ENCODE measurements at regions of chr1 and their contacts with region 1.

Region 1: GRCh38 chr1:110019770-110020169 is 14.7 kb upstream of the STRIP1 start:
- DNase-seq: no peak
- H3K4me3 ChIP-seq: no peak overlapping the region
- H3K27ac ChIP-seq: no peak overlapping the region
- H3K4me1 ChIP-seq: no peaks in the 10 kb centered on the region
- H3K27me3 ChIP-seq: no peaks in the 10 kb centered on the region

Region 2: GRCh38 chr1:110034451-110035235 is 14.9 kb after region 1 on chr1 and contains the start of gene STRIP1:
- CTCF ChIA-PET with region 1: interaction called, 22 read pairs
- POLR2A ChIA-PET with region 1: no interaction called
- DNase-seq: peak; percentile 98
- H3K4me3 ChIP-seq: peak within 1 kb of the TSS; percentile 69 to 96 (median 87)
- H3K27ac ChIP-seq: peak within 1 kb of the TSS; percentile 87 to 96
- H3K4me1 ChIP-seq: peaks cover 15 to 30% (median 18%) of the 10 kb centered on the region in 4 experiments
- H3K27me3 ChIP-seq: no peaks in the 10 kb centered on the region

Region 3: DNA sequence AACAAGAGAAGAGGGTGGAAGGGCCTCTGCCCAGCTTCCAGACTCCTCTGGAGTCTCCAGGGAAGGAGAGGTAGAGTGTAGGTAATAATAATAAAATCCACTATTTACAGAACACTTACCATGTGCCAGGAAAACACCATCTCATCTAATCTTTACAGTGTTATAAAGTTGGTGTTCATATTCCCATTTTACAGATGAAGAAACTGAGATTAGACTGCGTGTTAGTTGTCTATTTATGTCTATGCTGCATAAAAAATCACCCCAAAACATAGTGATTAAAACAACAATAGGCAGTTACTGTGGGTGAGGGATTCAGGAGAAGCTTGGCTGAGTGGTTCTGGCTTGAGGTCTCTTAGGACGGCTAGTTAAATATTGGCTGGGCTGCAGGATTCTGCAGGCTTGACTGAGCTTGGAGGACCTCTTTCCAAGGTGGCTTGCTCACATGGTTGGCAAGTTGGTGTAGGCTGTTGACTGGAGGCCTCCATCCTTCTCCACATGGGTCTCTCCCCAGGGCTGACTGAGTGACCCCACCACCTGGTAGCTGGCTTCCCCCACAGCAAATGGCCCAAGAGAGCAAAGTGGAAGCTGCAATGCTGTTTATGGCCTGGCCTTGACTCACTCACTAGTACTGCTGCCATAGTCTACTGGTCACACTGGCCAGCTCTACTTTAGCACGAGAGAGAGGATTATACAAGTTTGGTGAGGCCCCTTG is 57.2 kb after region 1 on chr1:
- CTCF ChIA-PET with region 1: no interaction called
- POLR2A ChIA-PET with region 1: no interaction called
- DNase-seq: no peak
- H3K4me3 ChIP-seq: no peak overlapping the region
- H3K27ac ChIP-seq: no peak overlapping the region
- H3K4me1 ChIP-seq: peaks cover 0 to under 1% (median 0%) of the 10 kb centered on the region in 4 experiments
- H3K27me3 ChIP-seq: peaks cover 8 to 50% (median 41%) of the 10 kb centered on the region in 5 experiments

Measured in common myeloid progenitor, CD34-positive (primary cell).